HEK293 (cell line): ENCODE measurements at regions of chr6 and their contacts with region 1.

Region 1: DNA sequence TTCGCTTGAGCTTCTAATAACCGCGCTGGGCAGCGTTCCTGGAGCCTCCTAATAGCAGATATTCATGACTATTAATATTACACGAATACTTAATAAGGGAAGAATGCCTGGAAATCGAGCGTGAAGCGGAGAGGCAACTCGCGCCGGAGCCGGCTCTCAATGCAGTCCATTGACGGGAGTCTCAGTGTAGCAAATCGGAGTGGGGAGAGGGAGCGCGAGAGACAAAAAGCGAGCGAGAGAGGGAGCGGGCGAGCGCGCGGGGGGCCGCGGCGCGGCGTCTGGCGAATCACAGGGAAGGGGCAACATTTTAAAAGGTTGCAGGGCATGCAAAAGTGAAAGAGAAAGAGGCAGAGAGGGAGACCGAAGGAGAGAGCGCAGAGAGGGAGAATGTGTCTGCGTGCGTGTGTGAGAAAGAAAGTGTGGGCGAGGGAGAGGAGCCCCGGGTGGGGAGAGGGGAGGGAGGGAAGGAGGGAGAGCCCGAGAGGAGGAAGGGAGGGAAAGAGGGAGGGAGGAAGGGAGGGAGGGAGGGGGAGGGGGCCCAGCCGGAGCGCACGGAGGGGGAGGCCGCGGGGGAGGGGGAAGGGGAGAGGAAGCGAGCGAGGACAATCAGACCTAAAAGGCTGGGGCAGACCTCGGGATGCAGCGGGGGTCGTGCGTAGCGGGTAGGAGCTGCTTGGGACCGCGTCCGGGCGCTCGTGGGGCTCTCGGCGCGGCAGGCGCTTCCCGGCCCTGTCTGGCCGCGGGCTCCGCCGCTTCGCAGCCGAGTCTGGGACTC is 2.7 kb downstream of the TFAP2A start:
- H3K4me3 ChIP-seq: peak overlapping the region; percentile 88
- H3K27ac ChIP-seq: peak overlapping the region; percentile 99
- H3K4me1 ChIP-seq: peaks cover 14% of the 10 kb centered on the region
- CTCF ChIP-seq: no peak; the same call in 1 of the 2 replicates

Region 2: GRCh38 chr6:10434692-10435376 is 22.7 kb after region 1 on chr6:
- CTCF ChIA-PET with region 1: interaction called, 42 read pairs
- POLR2A ChIA-PET with region 1: interaction called, 112 read pairs
- H3K4me3 ChIP-seq: no peak overlapping the region
- H3K27ac ChIP-seq: no peak overlapping the region
- H3K4me1 ChIP-seq: no peaks in the 10 kb centered on the region
- CTCF ChIP-seq: peak; percentile 71